Activated CD4-positive, alpha-beta memory T cell treated with anti-CD3 and anti-CD28 coated beads for 36 hours (primary cell): ENCODE measurements at regions of chr9 and their contacts with region 1.

Region 1: GRCh38 chr9:114405294-114406034 is 17.7 kb upstream of the AKNA start:
- DNase-seq: peak; percentile 87
- H3K4me3 Mint-ChIP-seq: no peak overlapping the region
- H3K27ac Mint-ChIP-seq: peak overlapping the region; percentile 3
- H3K4me1 Mint-ChIP-seq: peaks cover 4% of the 10 kb centered on the region
- H3K27me3 Mint-ChIP-seq: no peaks in the 10 kb centered on the region

Region 2: GRCh38 chr9:113756476-113757192 is 648.8 kb before region 1 on chr9:
- CTCF ChIA-PET with region 1: no interaction called
- POLR2A ChIA-PET with region 1: no interaction called
- intact Hi-C with region 1: no loop called
- DNase-seq: no peak
- H3K4me3 Mint-ChIP-seq: no peak overlapping the region
- H3K27ac Mint-ChIP-seq: no peak overlapping the region
- H3K4me1 Mint-ChIP-seq: no peaks in the 10 kb centered on the region
- H3K27me3 Mint-ChIP-seq: peaks cover 32% of the 10 kb centered on the region

Region 3: DNA sequence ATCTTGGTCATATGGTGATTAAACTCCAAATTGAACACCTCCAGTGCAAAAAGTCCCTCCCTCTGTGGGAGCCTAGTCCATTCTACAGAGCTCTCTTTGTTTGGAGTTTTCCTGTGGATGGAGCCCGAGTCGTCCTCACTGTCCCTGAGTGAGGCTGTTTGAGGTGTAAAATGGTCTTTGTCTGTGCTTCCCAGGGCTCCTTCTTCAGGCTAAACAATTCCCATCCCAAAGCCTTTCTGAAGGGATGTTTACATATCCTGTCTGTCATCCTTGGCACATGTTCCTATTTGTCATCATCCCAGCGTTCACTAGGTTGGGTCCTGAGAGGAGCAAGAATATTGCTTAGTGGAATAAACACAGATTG is 181.2 kb before region 1 on chr9:
- CTCF ChIA-PET with region 1: no interaction called
- POLR2A ChIA-PET with region 1: no interaction called
- intact Hi-C with region 1: no loop called
- DNase-seq: no peak
- H3K4me3 Mint-ChIP-seq: no peak overlapping the region
- H3K27ac Mint-ChIP-seq: no peak overlapping the region
- H3K4me1 Mint-ChIP-seq: no peaks in the 10 kb centered on the region
- H3K27me3 Mint-ChIP-seq: no peaks in the 10 kb centered on the region

Region 4: GRCh38 chr9:114434878-114435311 is 29.4 kb after region 1 on chr9:
- CTCF ChIA-PET with region 1: interaction called, 19 read pairs
- POLR2A ChIA-PET with region 1: no interaction called
- intact Hi-C with region 1: no loop called
- DNase-seq: peak; percentile 17
- H3K4me3 Mint-ChIP-seq: no peak overlapping the region
- H3K27ac Mint-ChIP-seq: no peak overlapping the region
- H3K4me1 Mint-ChIP-seq: peaks cover 3% of the 10 kb centered on the region
- H3K27me3 Mint-ChIP-seq: no peaks in the 10 kb centered on the region

Region 5: DNA sequence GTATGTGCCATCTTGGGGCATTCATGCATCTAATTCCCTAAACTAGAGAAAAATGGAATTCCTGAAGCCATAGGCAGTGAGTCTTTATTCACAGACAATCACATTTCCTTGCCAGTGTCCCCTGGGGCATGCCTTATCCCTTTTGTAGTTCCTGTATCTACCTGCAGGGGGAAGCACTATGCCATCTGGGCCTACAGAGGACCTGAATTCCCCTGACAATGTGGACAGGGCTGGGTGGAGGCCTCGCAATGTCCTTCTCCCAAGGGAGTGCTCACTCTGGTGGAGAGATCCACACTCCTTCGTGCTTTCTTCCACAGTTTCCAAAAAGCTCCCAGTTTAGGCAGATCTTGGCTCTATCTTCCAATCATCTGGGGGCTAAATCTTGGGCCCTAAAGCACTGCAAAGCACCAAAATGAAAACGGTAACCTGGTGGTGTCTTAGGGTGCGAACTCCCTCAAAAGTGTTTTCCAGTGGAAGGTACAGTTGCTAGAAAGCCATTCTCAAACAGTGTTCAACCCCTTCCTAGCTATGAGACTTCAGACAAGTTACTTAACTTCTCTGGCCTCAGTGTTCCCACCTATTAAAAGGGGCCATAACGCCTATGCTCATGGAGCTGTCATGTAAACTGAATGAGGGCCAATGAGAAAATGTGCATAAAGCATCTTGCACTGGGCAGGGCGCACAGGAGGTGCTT is 82.3 kb after region 1 on chr9:
- CTCF ChIA-PET with region 1: interaction called, 18 read pairs
- POLR2A ChIA-PET with region 1: no interaction called
- intact Hi-C with region 1: loop called (anchors 1 kb)
- DNase-seq: peak; percentile 69
- H3K4me3 Mint-ChIP-seq: no peak overlapping the region
- H3K27ac Mint-ChIP-seq: no peak overlapping the region
- H3K4me1 Mint-ChIP-seq: peaks cover 26% of the 10 kb centered on the region
- H3K27me3 Mint-ChIP-seq: peaks cover 1% of the 10 kb centered on the region

Region 6: GRCh38 chr9:114587385-114588202 is 182.1 kb after region 1 on chr9 and contains the start of gene ATP6V1G1:
- CTCF ChIA-PET with region 1: interaction called, 18 read pairs
- POLR2A ChIA-PET with region 1: interaction called, 3 read pairs
- intact Hi-C with region 1: no loop called
- DNase-seq: peak; percentile 100
- H3K4me3 Mint-ChIP-seq: peak within 1 kb of the TSS; percentile 99
- H3K27ac Mint-ChIP-seq: peak within 1 kb of the TSS; percentile 97
- H3K4me1 Mint-ChIP-seq: peaks cover 40% of the 10 kb centered on the region
- H3K27me3 Mint-ChIP-seq: no peaks in the 10 kb centered on the region
- total RNA-seq, gene ATP6V1G1: 32.1 to 38.9 TPM